Heart right ventricle (tissue), 16 donors: ENCODE measurements at regions of chr18 and their contacts with region 1.

Region 1: GRCh38 chr18:9951022-9951859 is 37.4 kb downstream of the VAPA start:
- DNase-seq: no peak
- ATAC-seq: peak in 7 of 8 donors; percentile 48 to 80 (median 69)
- H3K4me3 ChIP-seq: no peak overlapping the region
- H3K27ac ChIP-seq: no peak overlapping the region
- H3K4me1 ChIP-seq: peaks cover 0 to 20% (median 0%) of the 10 kb centered on the region in 9 donors
- H3K27me3 ChIP-seq: no peaks in the 10 kb centered on the region
- CTCF ChIP-seq: peak; percentile 30 to 69 (median 60)

Region 2: GRCh38 chr18:9683407-9684396 is 267.5 kb before region 1 on chr18:
- intact Hi-C with region 1: loop called in 2 of 10 experiments (anchors 5 to 10 kb)
- DNase-seq: peak in 1 of 2 donors; percentile 29
- ATAC-seq: peak; percentile 44 to 87 (median 70)
- H3K4me3 ChIP-seq: no peak overlapping the region
- H3K27ac ChIP-seq: peak overlapping the region in 8 of 10 donors; percentile 46 to 82 (median 70)
- H3K4me1 ChIP-seq: peaks cover 0 to 36% (median 22%) of the 10 kb centered on the region in 9 donors
- H3K27me3 ChIP-seq: no peaks in the 10 kb centered on the region
- CTCF ChIP-seq: peak in 7 of 9 donors; percentile 16 to 60 (median 52)

Region 3: DNA sequence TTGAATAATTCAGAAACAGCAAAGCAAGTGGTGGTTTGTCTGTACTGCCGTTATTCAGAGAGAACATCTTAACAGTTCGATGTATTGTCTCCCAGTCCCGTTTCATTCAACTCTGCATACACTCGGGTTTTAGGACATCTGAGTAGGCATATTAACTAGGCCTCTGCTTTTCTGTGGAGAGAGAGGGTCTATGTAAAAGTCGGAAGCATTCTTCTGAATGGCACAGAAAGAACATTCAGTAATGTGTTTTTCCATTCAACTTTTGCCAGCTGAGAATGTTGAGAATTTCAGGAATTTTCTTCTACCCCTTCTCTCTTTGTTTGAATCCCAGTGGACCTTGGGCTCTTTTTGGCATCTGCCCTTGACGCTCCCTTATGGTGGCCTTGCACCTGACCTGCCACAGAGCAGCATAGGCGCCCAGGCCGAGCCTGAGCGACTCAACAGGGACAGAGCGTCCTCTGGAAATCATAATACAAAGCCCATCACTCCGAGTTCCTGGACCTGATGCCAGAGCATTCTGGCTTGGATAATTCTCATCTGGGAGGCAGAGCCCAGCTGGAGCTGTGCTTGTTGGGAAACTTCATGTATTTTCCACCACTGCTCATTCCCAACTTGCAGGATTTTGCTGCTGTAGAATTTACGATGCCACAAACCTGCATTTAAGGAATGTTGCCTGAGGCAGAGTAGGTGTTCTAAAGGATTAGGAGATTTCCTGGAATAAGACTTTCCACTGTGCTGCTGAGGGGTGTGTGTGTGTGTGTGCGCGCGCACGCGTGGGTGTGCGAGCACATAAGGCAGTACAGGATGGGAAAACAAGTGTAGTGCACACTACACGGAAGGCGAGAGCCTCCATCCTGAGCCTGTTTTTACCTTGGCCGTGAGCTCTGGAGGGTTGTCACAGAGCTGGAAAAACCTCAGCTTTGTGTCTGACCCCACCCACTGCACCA is 142.7 kb before region 1 on chr18:
- intact Hi-C with region 1: loop called in 6 of 10 experiments (anchors 5 to 10 kb)
- DNase-seq: no peak
- ATAC-seq: peak in 7 of 8 donors; percentile 41 to 87 (median 57)
- H3K4me3 ChIP-seq: peak overlapping the region in 1 of 10 donors; percentile 16
- H3K27ac ChIP-seq: peak overlapping the region; percentile 9 to 80 (median 62)
- H3K4me1 ChIP-seq: peaks cover 15 to 56% (median 45%) of the 10 kb centered on the region in 9 donors
- H3K27me3 ChIP-seq: no peaks in the 10 kb centered on the region
- CTCF ChIP-seq: no peak

Region 4: DNA sequence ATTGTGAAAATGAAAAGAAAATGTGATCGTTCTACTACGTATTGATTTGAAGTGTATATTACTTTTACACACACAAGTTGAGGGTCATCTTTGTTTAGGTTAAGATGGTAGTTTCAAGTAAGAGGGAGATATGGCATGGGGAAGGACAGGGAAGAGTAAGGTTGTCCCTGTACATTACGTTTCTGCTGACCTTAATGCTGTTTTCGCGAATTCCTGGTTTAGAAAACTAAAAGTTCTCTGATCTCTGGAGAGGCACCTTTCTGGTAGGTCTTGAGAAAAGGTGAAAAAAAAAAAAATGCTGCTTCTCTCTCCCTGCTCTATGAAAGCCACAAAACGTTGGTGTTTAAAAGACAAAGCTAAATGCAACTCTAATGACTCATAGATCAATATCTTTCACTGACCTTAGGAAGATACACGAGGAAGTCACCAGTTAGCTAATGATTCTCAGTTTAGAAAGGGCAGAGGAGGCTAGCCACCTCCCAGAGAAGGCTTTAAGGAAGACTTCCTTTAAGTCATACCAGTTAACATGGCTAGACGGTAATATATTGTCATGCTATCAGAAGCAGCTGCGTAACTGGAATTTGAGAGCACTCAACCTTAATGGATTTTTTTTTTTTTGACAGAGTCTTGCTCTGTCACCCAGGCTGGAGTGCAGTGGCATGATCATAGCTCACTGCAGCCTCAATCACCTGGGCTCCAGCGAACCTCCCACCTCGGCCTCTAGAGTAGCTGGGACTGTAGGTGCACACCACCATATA is 52.3 kb before region 1 on chr18:
- intact Hi-C with region 1: no loop called
- DNase-seq: no peak
- ATAC-seq: no peak
- H3K4me3 ChIP-seq: no peak overlapping the region
- H3K27ac ChIP-seq: no peak overlapping the region
- H3K4me1 ChIP-seq: no peaks in the 10 kb centered on the region
- H3K27me3 ChIP-seq: no peaks in the 10 kb centered on the region
- CTCF ChIP-seq: no peak